ENCODE measurements at regions of chr11 and their contacts with region 1.

Region 1: GRCh38 chr11:447923-448731 is 2.0 kb upstream of the PTDSS2 start:
- DNase-seq: peak; percentile 90 to 94 (median 91)
- H3K4me3 ChIP-seq: peak overlapping the region; percentile 73 to 76
- H3K4me3 Mint-ChIP-seq: peak overlapping the region; percentile 88 to 93 (median 90)
- H3K27ac ChIP-seq: peak overlapping the region; percentile 85
- H3K27ac Mint-ChIP-seq: peak overlapping the region; percentile 93 to 98 (median 97)
- H3K4me1 ChIP-seq: peaks cover 32% of the 10 kb centered on the region
- H3K4me1 Mint-ChIP-seq: peaks cover 13 to 32% (median 22%) of the 10 kb centered on the region in 4 donors
- H3K27me3 ChIP-seq: no peaks in the 10 kb centered on the region
- H3K27me3 Mint-ChIP-seq: no peaks in the 10 kb centered on the region

Region 2: GRCh38 chr11:207208-207862 is 240.8 kb before region 1 on chr11 and contains the starts of genes BET1L and RIC8A:
- CTCF ChIA-PET with region 1: interaction called, 5 read pairs
- POLR2A ChIA-PET with region 1: interaction called, 50 read pairs
- intact Hi-C with region 1: loop called (anchors 1 kb)
- DNase-seq: peak; percentile 95 to 99 (median 98)
- H3K4me3 ChIP-seq: peak within 1 kb of the TSS; percentile 95 to 100
- H3K4me3 Mint-ChIP-seq: peak within 1 kb of the TSS; percentile 94 to 100 (median 99)
- H3K27ac ChIP-seq: peak within 1 kb of the TSS; percentile 98
- H3K27ac Mint-ChIP-seq: peak within 1 kb of the TSS; percentile 99 to 100 (median 99)
- H3K4me1 ChIP-seq: peaks cover 55% of the 10 kb centered on the region
- H3K4me1 Mint-ChIP-seq: peaks cover 22 to 73% (median 50%) of the 10 kb centered on the region in 4 donors
- H3K27me3 ChIP-seq: no peaks in the 10 kb centered on the region
- H3K27me3 Mint-ChIP-seq: no peaks in the 10 kb centered on the region
- total RNA-seq, gene BET1L: 122 to 129 TPM
- total RNA-seq, gene RIC8A: 96.7 to 111 TPM

Region 3: DNA sequence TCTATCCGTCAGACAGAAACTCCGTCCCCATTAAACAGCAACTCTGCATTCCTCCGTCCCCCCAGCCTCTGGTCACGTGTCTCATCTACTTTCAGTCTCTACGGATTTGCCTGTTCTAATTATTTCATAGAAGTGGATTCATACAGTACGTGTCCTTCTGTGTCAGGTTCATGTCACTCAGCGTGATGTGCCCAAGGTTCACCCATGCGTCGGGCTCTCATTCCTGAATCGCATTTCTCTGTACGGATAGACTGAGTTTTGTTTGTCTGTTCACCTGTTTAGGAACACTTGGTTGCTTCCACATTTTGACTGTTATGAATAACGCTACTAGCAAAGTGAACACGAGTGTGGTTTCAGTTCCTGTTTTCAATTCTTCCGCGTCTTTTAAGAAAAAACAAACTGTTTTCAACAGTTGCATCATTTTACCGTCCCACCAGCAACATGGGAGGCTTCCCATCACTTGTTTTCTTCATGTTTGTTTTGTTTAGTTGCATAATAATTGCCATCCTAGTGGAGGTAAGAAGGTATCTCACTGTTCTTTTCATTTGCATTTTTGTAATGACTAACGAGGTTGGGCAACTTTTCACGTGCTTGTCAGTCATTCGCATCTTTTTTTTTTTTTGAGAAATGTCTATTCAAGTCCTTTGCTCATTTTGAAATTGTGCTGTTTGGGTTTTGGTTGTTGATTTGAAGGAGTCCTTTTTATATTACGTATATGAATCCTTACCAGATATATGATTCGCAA is 178.8 kb before region 1 on chr11:
- CTCF ChIA-PET with region 1: interaction called, 4 read pairs
- POLR2A ChIA-PET with region 1: interaction called, 15 read pairs
- intact Hi-C with region 1: no loop called
- DNase-seq: peak; percentile 82 to 91 (median 89)
- H3K4me3 ChIP-seq: peak overlapping the region; percentile 6 to 62
- H3K4me3 Mint-ChIP-seq: peak overlapping the region; percentile 81 to 95 (median 87)
- H3K27ac ChIP-seq: peak overlapping the region; percentile 72
- H3K27ac Mint-ChIP-seq: peak overlapping the region; percentile 91 to 99 (median 96)
- H3K4me1 ChIP-seq: peaks cover 25% of the 10 kb centered on the region
- H3K4me1 Mint-ChIP-seq: peaks cover 20 to 34% (median 28%) of the 10 kb centered on the region in 4 donors
- H3K27me3 ChIP-seq: no peaks in the 10 kb centered on the region
- H3K27me3 Mint-ChIP-seq: no peaks in the 10 kb centered on the region

Region 4: GRCh38 chr11:313787-314547 is 134.2 kb before region 1 on chr11 and contains the start of gene IFITM1:
- CTCF ChIA-PET with region 1: interaction called, 12 read pairs
- POLR2A ChIA-PET with region 1: interaction called, 6 read pairs
- intact Hi-C with region 1: no loop called
- DNase-seq: peak; percentile 72 to 85 (median 79)
- H3K4me3 ChIP-seq: peak within 1 kb of the TSS; percentile 59 to 91
- H3K4me3 Mint-ChIP-seq: peak within 1 kb of the TSS; percentile 92 to 99 (median 98)
- H3K27ac ChIP-seq: peak within 1 kb of the TSS; percentile 76
- H3K27ac Mint-ChIP-seq: peak within 1 kb of the TSS; percentile 94 to 100 (median 98)
- H3K4me1 ChIP-seq: peaks cover 37% of the 10 kb centered on the region
- H3K4me1 Mint-ChIP-seq: peaks cover 29 to 56% (median 35%) of the 10 kb centered on the region in 4 donors
- H3K27me3 ChIP-seq: no peaks in the 10 kb centered on the region
- H3K27me3 Mint-ChIP-seq: no peaks in the 10 kb centered on the region
- total RNA-seq, gene IFITM1: 119 to 121 TPM

Region 5: DNA sequence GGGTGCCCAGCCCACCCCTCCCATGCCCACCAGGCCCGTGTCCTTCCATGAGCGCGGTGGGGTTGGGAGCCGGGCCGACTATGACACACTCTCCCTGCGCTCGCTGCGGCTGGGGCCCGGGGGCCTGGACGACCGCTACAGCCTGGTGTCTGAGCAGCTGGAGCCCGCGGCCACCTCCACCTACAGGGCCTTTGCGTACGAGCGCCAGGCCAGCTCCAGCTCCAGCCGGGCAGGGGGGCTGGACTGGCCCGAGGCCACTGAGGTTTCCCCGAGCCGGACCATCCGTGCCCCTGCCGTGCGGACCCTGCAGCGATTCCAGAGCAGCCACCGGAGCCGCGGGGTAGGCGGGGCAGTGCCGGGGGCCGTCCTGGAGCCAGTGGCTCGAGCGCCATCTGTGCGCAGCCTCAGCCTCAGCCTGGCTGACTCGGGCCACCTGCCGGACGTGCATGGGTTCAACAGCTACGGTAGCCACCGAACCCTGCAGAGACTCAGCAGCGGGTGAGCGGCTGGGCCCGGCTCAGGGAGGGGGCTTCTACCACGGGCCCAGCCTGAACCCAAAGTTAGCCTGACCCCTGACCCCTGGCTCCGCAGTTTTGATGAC is 51.1 kb before region 1 on chr11:
- CTCF ChIA-PET with region 1: interaction called, 23 read pairs
- POLR2A ChIA-PET with region 1: interaction called, 7 read pairs
- intact Hi-C with region 1: no loop called
- DNase-seq: peak; percentile 41 to 57 (median 46)
- H3K4me3 ChIP-seq: peak overlapping the region in 1 of 2 donors; percentile 35
- H3K4me3 Mint-ChIP-seq: peak overlapping the region in 5 of 8 donors; percentile 13 to 54 (median 21)
- H3K27ac ChIP-seq: no peak overlapping the region
- H3K27ac Mint-ChIP-seq: no peak overlapping the region
- H3K4me1 ChIP-seq: peaks cover 4% of the 10 kb centered on the region
- H3K4me1 Mint-ChIP-seq: peaks cover 0 to 10% (median 0%) of the 10 kb centered on the region in 4 donors
- H3K27me3 ChIP-seq: no peaks in the 10 kb centered on the region
- H3K27me3 Mint-ChIP-seq: no peaks in the 10 kb centered on the region

Region 6: GRCh38 chr11:472272-472671 is 24.1 kb after region 1 on chr11:
- CTCF ChIA-PET with region 1: no interaction called
- POLR2A ChIA-PET with region 1: no interaction called
- intact Hi-C with region 1: no loop called
- DNase-seq: no peak
- H3K4me3 ChIP-seq: no peak overlapping the region
- H3K4me3 Mint-ChIP-seq: no peak overlapping the region
- H3K27ac ChIP-seq: no peak overlapping the region
- H3K27ac Mint-ChIP-seq: no peak overlapping the region
- H3K4me1 ChIP-seq: no peaks in the 10 kb centered on the region
- H3K4me1 Mint-ChIP-seq: peaks cover 0 to 2% (median 0%) of the 10 kb centered on the region in 4 donors
- H3K27me3 ChIP-seq: no peaks in the 10 kb centered on the region
- H3K27me3 Mint-ChIP-seq: no peaks in the 10 kb centered on the region

Region 7: GRCh38 chr11:506238-506994 is 58.3 kb after region 1 on chr11:
- CTCF ChIA-PET with region 1: interaction called, 6 read pairs
- POLR2A ChIA-PET with region 1: interaction called, 18 read pairs
- intact Hi-C with region 1: loop called (anchors 1 kb)
- DNase-seq: peak; percentile 94 to 98 (median 97)
- H3K4me3 ChIP-seq: peak overlapping the region; percentile 91 to 99
- H3K4me3 Mint-ChIP-seq: peak overlapping the region; percentile 95 to 100 (median 98)
- H3K27ac ChIP-seq: peak overlapping the region; percentile 100
- H3K27ac Mint-ChIP-seq: peak overlapping the region; percentile 100
- H3K4me1 ChIP-seq: peaks cover 35% of the 10 kb centered on the region
- H3K4me1 Mint-ChIP-seq: peaks cover 6 to 42% (median 25%) of the 10 kb centered on the region in 4 donors
- H3K27me3 ChIP-seq: no peaks in the 10 kb centered on the region
- H3K27me3 Mint-ChIP-seq: no peaks in the 10 kb centered on the region

Region 8: GRCh38 chr11:548700-549603 is 100.8 kb after region 1 on chr11:
- CTCF ChIA-PET with region 1: no interaction called
- POLR2A ChIA-PET with region 1: no interaction called
- intact Hi-C with region 1: no loop called
- DNase-seq: peak in 1 of 5 donors; percentile 4
- H3K4me3 ChIP-seq: no peak overlapping the region
- H3K4me3 Mint-ChIP-seq: no peak overlapping the region
- H3K27ac ChIP-seq: no peak overlapping the region
- H3K27ac Mint-ChIP-seq: no peak overlapping the region
- H3K4me1 ChIP-seq: peaks cover under 1% of the 10 kb centered on the region
- H3K4me1 Mint-ChIP-seq: peaks cover 0 to 4% (median 0%) of the 10 kb centered on the region in 4 donors
- H3K27me3 ChIP-seq: no peaks in the 10 kb centered on the region
- H3K27me3 Mint-ChIP-seq: no peaks in the 10 kb centered on the region

Region 9: GRCh38 chr11:727859-728748 is 280.0 kb after region 1 on chr11:
- CTCF ChIA-PET with region 1: no interaction called
- POLR2A ChIA-PET with region 1: no interaction called
- intact Hi-C with region 1: loop called (anchors 10 kb)
- DNase-seq: peak; percentile 71 to 78 (median 75)
- H3K4me3 ChIP-seq: no peak overlapping the region
- H3K4me3 Mint-ChIP-seq: no peak overlapping the region
- H3K27ac ChIP-seq: no peak overlapping the region
- H3K27ac Mint-ChIP-seq: no peak overlapping the region
- H3K4me1 ChIP-seq: peaks cover 26% of the 10 kb centered on the region
- H3K4me1 Mint-ChIP-seq: peaks cover 4 to 13% (median 9%) of the 10 kb centered on the region in 4 donors
- H3K27me3 ChIP-seq: no peaks in the 10 kb centered on the region
- H3K27me3 Mint-ChIP-seq: peaks cover 1 to 2% of the 10 kb centered on the region in 2 donors

Measured in CD4-positive, alpha-beta memory T cell (primary cell).